ENCODE measurements at regions of chr10 and their contacts with region 1.

Region 1: DNA sequence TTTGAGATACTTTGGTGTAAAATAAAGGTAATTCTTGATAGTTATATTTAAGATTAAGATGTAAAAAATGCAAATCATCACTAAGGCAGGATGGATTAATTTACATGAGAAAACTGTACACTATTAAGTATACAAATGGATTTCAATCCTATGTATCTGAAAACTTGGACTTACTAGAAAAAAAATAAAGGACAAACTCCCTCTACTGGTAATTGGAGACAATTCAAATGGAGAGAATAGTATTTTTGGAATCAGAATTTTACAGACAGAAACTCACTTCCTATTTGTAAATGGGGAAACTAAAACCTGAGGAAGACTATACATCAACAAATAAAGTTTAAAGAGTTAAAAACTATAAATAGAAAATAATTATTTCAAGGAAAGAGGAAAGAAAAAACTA is 62.6 kb downstream of the CUL2 start:
- DNase-seq: no peak
- H3K4me3 ChIP-seq: no peak overlapping the region
- H3K27ac ChIP-seq: no peak overlapping the region
- H3K4me1 ChIP-seq: no peaks in the 10 kb centered on the region
- H3K27me3 ChIP-seq: no peaks in the 10 kb centered on the region
- CTCF ChIP-seq: peak in 1 of 3 donors; percentile 20
- EP300 ChIP-seq: no peak
- POLR2A ChIP-seq: no peak

Region 2: GRCh38 chr10:34723750-34724149 is 303.8 kb before region 1 on chr10:
- intact Hi-C with region 1: loop called in 1 of 4 experiments (anchors 10 kb)
- DNase-seq: peak in 4 of 5 donors; percentile 31 to 54 (median 46)
- H3K4me3 ChIP-seq: no peak overlapping the region
- H3K27ac ChIP-seq: no peak overlapping the region
- H3K4me1 ChIP-seq: peaks cover 15% of the 10 kb centered on the region
- H3K27me3 ChIP-seq: no peaks in the 10 kb centered on the region
- CTCF ChIP-seq: peak; percentile 31 to 52 (median 46)
- EP300 ChIP-seq: no peak
- POLR2A ChIP-seq: no peak

Region 3: DNA sequence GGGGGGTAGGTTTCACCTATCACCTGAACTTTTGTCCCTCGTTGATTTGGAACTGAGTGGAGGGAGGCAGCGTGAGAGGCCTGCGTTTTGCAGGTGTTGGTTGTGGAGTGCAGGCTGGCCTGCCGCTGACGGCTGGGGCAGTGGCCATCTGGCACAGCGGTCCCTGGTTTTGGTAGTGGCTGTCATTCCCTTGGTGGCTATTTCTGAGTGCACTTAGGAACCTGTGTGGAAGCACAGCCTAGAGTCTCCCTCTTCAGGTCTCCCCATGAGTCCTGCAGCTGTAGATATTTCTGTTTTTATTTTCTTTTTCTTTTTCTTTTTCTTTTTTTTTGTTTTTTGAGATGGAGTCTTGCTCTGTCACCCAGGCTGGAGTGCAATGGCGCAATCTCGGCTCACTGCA is 66.6 kb before region 1 on chr10:
- intact Hi-C with region 1: no loop called
- DNase-seq: no peak
- H3K4me3 ChIP-seq: no peak overlapping the region
- H3K27ac ChIP-seq: no peak overlapping the region
- H3K4me1 ChIP-seq: no peaks in the 10 kb centered on the region
- H3K27me3 ChIP-seq: no peaks in the 10 kb centered on the region
- CTCF ChIP-seq: no peak
- EP300 ChIP-seq: no peak
- POLR2A ChIP-seq: no peak

Measured in ovary (tissue), 10 donors.